ENCODE measurements at regions of chr9 and their contacts with region 1.

Region 1: DNA sequence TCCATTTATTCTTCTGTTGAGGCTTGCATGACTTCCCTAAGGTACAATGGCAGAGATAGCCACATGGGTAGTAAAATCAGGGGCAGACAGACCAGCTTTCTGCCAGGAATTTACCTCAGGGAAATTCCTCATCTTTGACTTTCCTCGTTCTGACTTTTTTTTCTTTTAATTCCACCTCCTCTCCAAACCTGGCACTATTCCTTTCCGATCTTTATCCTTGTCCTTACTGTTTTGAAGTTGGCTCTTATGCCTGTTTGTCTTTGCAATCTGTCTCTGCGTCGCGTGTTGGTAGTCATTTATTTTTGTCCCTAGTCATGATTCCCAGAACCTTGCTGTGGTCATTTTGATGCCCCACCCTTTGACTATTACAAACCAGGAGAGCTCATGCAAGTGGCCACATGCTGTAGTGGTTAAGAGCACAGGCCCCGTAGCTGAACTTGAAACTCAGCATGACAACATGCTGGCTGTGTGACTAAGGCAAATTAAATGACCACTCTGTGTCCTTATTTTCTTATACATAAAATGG is 19.0 kb downstream of the TMC1 start:
- DNase-seq: peak; percentile 32 to 78 (median 54)
- ATAC-seq: peak; percentile 93
- H3K4me3 ChIP-seq: no peak overlapping the region
- H3K27ac ChIP-seq: peak overlapping the region; percentile 81
- H3K4me1 ChIP-seq: peaks cover 3 to 19% of the 10 kb centered on the region in 2 experiments; a peak in 3 of 5 replicates
- H3K27me3 ChIP-seq: no peaks in the 10 kb centered on the region
- CTCF ChIP-seq: no peak
- EP300 ChIP-seq: no peak; the same call in 1 of the 2 replicates
- POLR2A ChIP-seq: no peak
- RAD21 ChIP-seq: no peak

Region 2: GRCh38 chr9:72464857-72465592 is 75.4 kb before region 1 on chr9:
- CTCF ChIA-PET with region 1: no interaction called
- POLR2A ChIA-PET with region 1: no interaction called
- in situ Hi-C with region 1: no loop called
- intact Hi-C with region 1: loop called (anchors 5 kb)
- DNase-seq: no peak
- ATAC-seq: no peak
- H3K4me3 ChIP-seq: no peak overlapping the region
- H3K27ac ChIP-seq: no peak overlapping the region
- H3K4me1 ChIP-seq: no peaks in the 10 kb centered on the region
- H3K27me3 ChIP-seq: no peaks in the 10 kb centered on the region
- CTCF ChIP-seq: no peak
- EP300 ChIP-seq: no peak
- POLR2A ChIP-seq: no peak
- RAD21 ChIP-seq: no peak

Region 3: DNA sequence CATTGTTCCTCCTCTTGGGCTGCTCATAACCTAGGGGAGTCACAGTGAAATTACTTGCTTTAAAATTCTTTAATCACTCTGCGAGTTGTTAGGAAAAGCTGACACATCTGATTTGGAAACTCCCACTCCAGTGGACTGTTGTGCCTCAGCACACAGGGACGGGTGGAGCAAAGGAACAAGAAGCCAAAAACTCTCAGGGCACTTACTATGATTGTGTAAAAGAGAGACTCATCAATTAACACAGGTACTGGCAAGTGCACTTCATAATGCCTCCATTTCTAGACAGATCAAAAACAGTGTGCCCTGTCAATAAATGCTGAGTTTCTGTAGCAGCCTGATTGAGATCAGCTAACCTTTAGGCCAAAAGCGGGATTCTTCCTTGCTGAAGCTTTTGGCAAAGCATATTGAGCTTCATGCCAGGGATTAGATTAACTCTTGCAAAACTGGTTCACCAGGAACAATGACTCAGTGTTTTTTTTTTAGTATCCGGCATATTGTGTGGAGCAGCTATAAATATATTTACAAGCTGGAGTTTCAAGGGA is 36.9 kb after region 1 on chr9:
- CTCF ChIA-PET with region 1: no interaction called
- POLR2A ChIA-PET with region 1: no interaction called
- in situ Hi-C with region 1: no loop called
- intact Hi-C with region 1: loop called (anchors 5 kb)
- DNase-seq: no peak
- ATAC-seq: no peak
- H3K4me3 ChIP-seq: no peak overlapping the region
- H3K27ac ChIP-seq: no peak overlapping the region; the same call in 2 of the 3 replicates
- H3K4me1 ChIP-seq: peaks cover 9 to 43% of the 10 kb centered on the region in 2 experiments; a peak in 4 of 5 replicates
- H3K27me3 ChIP-seq: no peaks in the 10 kb centered on the region
- CTCF ChIP-seq: no peak
- EP300 ChIP-seq: no peak
- POLR2A ChIP-seq: no peak
- RAD21 ChIP-seq: no peak

Measured in K562 (cell line).